HEK293 (cell line): ENCODE measurements at regions of chr22 and their contacts with region 1.

Region 1: GRCh38 chr22:28112548-28113043 is 193.5 kb upstream of the PITPNB start:
- H3K4me3 ChIP-seq: no peak overlapping the region
- H3K27ac ChIP-seq: no peak overlapping the region
- H3K4me1 ChIP-seq: no peaks in the 10 kb centered on the region
- CTCF ChIP-seq: peak; percentile 54

Region 2: GRCh38 chr22:28123989-28124766 is 11.6 kb after region 1 on chr22:
- CTCF ChIA-PET with region 1: interaction called, 12 read pairs
- POLR2A ChIA-PET with region 1: interaction called, 5 read pairs
- H3K4me3 ChIP-seq: no peak overlapping the region
- H3K27ac ChIP-seq: no peak overlapping the region
- H3K4me1 ChIP-seq: peaks cover 3% of the 10 kb centered on the region
- CTCF ChIP-seq: no peak

Region 3: GRCh38 chr22:28129319-28129962 is 16.8 kb after region 1 on chr22:
- CTCF ChIA-PET with region 1: interaction called, 12 read pairs
- POLR2A ChIA-PET with region 1: interaction called, 5 read pairs
- H3K4me3 ChIP-seq: no peak overlapping the region
- H3K27ac ChIP-seq: no peak overlapping the region
- H3K4me1 ChIP-seq: no peaks in the 10 kb centered on the region; the same call in 1 of the 2 replicates
- CTCF ChIP-seq: no peak